Right ventricle myocardium inferior (tissue), 1 donor: ENCODE measurements at regions of chr4 and their contacts with region 1.

Region 1: GRCh38 chr4:25913851-25914669 is at the start of gene SMIM20:
- DNase-seq: peak; percentile 94
- ATAC-seq: peak; percentile 98
- total RNA-seq, gene SMIM20: 41.5 TPM

Region 2: GRCh38 chr4:25862411-25863346 is 51.4 kb before region 1 on chr4 and contains the start of gene SEL1L3:
- intact Hi-C with region 1: loop called (anchors 2 kb)
- DNase-seq: peak; percentile 77
- ATAC-seq: peak; percentile 36
- total RNA-seq, gene SEL1L3: 3.9 TPM